ENCODE measurements at regions of chr1 and their contacts with region 1.

Region 1: DNA sequence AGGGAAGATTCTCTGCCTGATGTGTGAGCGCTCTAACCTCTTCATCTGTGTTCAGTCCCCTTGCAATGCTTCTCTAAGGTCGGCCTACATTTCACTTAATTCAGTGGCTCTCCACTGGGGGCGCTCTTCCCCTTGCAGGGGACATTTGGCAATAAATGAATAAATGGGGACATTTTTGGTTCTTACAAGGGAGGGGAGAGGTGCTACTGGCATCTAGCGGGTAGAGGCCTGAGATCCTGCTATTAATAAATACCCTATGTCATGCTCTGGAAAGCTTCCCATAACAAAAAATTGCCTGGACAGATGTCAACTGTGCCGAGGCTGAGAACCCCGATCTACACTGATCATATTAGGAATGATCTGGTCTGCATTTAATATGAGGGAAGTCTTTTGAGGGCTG is 25.9 kb upstream of the DNAJC11 start:
- DNase-seq: peak; percentile 38
- ATAC-seq: peak; percentile 47 to 57

Region 2: DNA sequence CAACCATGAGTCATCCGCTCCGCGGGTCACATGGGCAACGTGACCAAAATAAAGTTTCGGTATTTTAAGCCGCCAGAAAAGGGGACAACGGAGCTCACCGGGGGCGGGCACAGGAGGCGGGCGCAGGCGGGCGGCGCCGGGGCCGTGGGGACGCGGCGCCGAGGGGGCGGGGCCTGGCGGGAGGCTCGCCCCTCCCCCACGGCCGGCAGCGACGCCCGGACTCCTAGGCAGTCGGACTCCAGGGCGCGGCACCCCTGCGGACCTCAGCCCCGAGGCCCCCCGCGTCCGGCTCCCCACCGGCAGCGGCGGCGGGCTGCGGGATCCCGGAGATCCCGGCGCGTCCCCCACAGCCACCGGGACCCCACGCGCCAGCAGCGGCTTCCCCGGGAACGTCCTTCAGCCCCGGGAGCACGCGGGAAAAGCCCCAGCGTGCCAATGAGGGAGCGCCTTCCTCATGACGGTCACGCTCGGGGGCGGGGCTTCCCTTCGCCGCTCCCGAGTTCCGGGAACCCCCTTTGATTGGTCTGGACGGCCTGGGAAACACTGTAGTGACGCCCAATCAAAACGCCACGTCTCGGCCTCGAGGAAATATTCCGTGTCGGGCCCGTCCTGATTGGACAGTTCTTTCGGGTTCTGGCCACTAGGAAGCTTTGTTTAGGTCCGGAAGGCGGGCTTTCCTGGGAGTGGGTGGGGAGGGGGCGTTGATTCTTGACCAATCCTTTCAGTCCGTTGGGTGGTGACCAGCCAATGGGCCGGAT is 57.2 kb after region 1 on chr1:
- intact Hi-C with region 1: loop called in 1 of 2 experiments (anchors 10 kb)
- DNase-seq: peak; percentile 100
- ATAC-seq: peak; percentile 91 to 95

Region 3: GRCh38 chr1:6889875-6890480 is 162.4 kb after region 1 on chr1:
- intact Hi-C with region 1: loop called (anchors 5 to 10 kb)
- DNase-seq: peak; percentile 53
- ATAC-seq: peak; percentile 82 to 83

Region 4: DNA sequence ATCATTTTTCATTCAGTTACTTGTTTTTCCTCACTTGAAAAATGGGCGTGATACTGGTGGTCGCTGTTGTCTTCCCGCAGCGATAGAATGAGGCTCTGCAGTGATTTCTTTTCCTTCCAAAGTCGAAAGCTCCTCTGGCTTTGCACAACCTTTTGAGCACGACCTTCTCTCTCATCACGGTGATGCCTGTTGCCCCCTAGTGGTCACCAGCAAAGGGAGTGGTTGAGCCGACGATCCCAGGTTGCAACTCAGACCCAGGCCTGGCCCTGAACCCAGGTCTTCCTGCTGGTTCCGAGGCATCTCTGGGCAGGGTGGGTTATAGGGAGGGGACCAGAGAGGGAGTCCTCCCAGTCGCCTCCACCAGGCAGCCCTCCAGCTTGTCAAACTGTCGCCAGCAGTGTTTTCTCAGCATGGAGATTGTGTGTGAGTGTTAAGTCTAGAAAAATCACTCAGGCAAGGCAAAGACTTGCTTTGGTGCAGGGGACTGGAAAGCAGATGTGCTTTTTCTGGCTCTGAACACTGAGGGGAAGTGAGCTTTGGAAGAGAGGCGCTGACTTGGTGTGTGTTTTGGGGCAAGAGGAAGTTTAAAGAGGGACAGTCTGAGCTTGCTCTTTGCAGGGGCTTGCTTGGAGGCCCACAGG is 343.0 kb after region 1 on chr1:
- intact Hi-C with region 1: loop called in 1 of 2 experiments (anchors 10 kb)
- DNase-seq: peak; percentile 70
- ATAC-seq: peak; percentile 87 to 93

Region 5: DNA sequence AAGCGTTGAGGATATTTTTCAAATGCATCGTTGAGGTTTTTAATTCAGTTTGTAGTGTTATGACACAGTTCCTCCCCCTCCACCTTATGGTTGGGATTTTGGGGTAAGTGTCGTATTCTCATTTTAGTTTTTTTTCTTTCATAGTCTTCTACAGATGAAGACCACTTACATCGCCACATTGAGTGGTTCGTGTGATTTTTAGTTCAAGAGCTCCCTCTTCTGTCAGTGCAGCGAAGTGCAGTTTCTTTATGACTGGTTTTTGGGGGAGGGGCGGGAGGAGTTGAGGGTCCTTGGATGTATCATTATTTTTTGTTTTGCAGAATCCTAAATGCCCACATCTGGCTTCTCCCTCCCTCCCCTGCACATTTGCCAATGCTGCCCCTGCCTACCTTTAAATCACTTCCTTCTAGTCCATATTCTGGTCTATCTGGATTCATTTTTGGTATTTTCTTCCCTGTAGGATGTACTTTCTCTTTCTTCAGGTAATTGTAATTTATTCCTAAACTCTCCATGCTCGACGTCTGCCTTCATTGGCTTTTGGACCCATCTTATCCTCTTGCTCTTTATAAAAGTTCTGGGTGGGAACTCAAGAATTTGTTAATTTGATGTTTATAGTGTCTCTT is 490.8 kb after region 1 on chr1:
- intact Hi-C with region 1: loop called (anchors 5 to 10 kb)
- DNase-seq: peak; percentile 20
- ATAC-seq: no peak

Region 6: DNA sequence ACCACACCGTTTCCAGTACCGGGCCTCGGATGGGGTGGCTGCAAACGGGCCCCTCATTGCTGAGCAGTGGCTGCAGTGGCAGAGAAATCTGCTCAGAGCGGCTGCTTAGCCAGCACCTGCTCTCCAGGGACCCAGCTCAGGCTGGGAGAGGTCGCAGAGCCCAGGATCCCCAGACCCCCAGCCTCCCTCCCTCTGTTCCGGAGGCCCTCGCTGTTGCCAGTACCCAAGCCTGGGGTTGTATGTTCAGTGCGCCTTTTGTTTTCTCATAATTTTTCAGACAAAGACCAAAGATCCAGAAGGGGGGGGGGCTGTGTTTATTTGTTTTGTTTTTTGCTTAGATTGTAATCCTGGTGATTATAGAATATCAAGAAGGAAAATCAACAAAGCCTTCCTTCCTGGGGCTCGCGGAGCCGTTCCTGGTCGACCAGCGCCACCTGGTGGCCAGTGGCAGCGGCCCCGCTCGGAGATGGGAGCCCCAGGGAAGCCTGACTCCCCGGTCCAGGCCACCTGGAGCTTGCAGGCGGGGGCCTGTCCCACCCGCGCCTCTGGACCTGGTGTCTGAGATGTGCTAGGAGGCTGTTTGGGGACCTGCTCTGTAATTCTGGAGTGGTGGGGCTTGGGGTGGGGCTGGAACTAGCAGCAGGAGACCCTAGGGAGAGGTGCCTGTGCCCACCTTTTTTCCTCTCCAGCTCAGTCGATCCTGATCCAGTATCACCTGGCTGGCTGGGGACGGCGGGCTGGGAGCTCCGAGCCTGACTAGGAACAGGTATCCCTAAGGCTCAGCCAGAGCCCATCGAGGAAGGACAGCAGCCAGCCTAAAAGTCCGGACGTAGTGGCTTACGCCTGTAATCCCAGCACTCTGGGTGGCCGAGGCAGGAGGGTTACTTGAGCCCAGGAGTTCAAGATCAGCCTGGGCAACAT is 919.7 kb after region 1 on chr1:
- intact Hi-C with region 1: loop called in 1 of 2 experiments (anchors 10 kb)
- DNase-seq: peak; percentile 76
- ATAC-seq: peak in 1 of 2 donors; percentile 48